ENCODE measurements at regions of chr10 and their contacts with region 1.

Region 1: GRCh38 chr10:178208-178607 is 43.0 kb downstream of the ZMYND11 start:
- DNase-seq: peak; percentile 66
- H3K4me3 ChIP-seq: no peak overlapping the region
- H3K27ac ChIP-seq: no peak overlapping the region
- H3K4me1 ChIP-seq: peaks cover 19% of the 10 kb centered on the region
- H3K27me3 ChIP-seq: no peaks in the 10 kb centered on the region
- CTCF ChIP-seq: peak; percentile 10 to 24
- POLR2A ChIP-seq: no peak

Region 2: GRCh38 chr10:154348-154747 is 23.9 kb before region 1 on chr10:
- CTCF ChIA-PET with region 1: no interaction called
- POLR2A ChIA-PET with region 1: no interaction called
- dilution Hi-C with region 1: no loop called
- intact Hi-C with region 1: no loop called
- DNase-seq: no peak
- H3K4me3 ChIP-seq: no peak overlapping the region
- H3K27ac ChIP-seq: no peak overlapping the region
- H3K4me1 ChIP-seq: no peaks in the 10 kb centered on the region
- H3K27me3 ChIP-seq: no peaks in the 10 kb centered on the region
- CTCF ChIP-seq: no peak
- POLR2A ChIP-seq: no peak

Region 3: GRCh38 chr10:167383-167782 is 10.8 kb before region 1 on chr10:
- CTCF ChIA-PET with region 1: no interaction called
- POLR2A ChIA-PET with region 1: no interaction called
- dilution Hi-C with region 1: no loop called
- intact Hi-C with region 1: no loop called
- DNase-seq: no peak
- H3K4me3 ChIP-seq: no peak overlapping the region
- H3K27ac ChIP-seq: no peak overlapping the region
- H3K4me1 ChIP-seq: no peaks in the 10 kb centered on the region
- H3K27me3 ChIP-seq: no peaks in the 10 kb centered on the region
- CTCF ChIP-seq: no peak
- POLR2A ChIP-seq: no peak

Region 4: DNA sequence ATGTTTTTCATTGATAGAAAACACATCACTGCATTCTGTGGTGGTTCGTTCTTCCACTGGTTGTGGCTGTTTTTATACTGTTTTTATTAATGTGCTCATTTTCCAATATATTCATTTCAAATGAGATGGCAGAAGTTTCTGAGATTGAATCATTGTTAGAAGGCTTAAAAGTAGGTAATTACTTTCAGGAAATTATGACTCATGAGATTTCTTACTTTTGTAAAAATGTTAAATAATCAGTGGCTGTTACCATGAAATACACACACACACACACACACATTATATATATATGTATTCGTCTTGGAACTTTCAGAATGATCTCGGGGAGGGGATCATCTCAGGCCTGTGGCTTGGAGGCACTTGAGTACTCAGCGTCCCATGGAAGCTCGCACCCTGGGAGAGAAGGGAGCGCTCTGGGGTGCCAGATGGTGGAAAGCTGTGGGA is 23.1 kb after region 1 on chr10:
- CTCF ChIA-PET with region 1: interaction called, 5 read pairs
- POLR2A ChIA-PET with region 1: no interaction called
- dilution Hi-C with region 1: no loop called
- intact Hi-C with region 1: loop called (anchors 1 kb)
- DNase-seq: peak; percentile 81
- H3K4me3 ChIP-seq: peak overlapping the region in 1 of 3 experiments; percentile 6
- H3K27ac ChIP-seq: peak overlapping the region; percentile 80
- H3K4me1 ChIP-seq: peaks cover 22% of the 10 kb centered on the region
- H3K27me3 ChIP-seq: no peaks in the 10 kb centered on the region
- CTCF ChIP-seq: no peak
- POLR2A ChIP-seq: no peak

Region 5: GRCh38 chr10:209361-209760 is 31.2 kb after region 1 on chr10:
- CTCF ChIA-PET with region 1: interaction called, 5 read pairs
- POLR2A ChIA-PET with region 1: no interaction called
- dilution Hi-C with region 1: no loop called
- intact Hi-C with region 1: loop called (anchors 1 kb)
- DNase-seq: peak; percentile 40
- H3K4me3 ChIP-seq: no peak overlapping the region
- H3K27ac ChIP-seq: no peak overlapping the region
- H3K4me1 ChIP-seq: no peaks in the 10 kb centered on the region
- H3K27me3 ChIP-seq: no peaks in the 10 kb centered on the region
- CTCF ChIP-seq: peak; percentile 7 to 17
- POLR2A ChIP-seq: no peak

Region 6: DNA sequence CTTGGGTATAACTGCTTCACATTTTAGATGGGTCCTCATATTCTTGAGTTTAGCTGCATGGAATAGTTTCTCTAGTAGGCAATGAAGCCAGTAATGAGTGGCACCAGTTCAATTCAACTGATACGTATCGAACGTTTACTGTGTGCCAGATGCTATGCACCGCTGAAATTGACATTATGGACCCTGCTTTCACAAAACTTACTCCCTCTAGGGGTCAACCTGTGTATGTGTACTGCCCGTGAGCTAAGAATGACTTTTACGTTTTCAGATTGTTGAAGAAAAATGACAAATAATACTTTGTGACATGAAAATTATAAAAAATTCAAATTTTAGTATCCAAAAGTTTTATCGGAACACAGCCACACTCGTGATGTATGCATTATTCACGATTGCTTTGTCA is 52.5 kb after region 1 on chr10:
- CTCF ChIA-PET with region 1: interaction called, 7 read pairs
- POLR2A ChIA-PET with region 1: no interaction called
- dilution Hi-C with region 1: no loop called
- intact Hi-C with region 1: loop called (anchors 2 kb)
- DNase-seq: peak; percentile 12
- H3K4me3 ChIP-seq: no peak overlapping the region
- H3K27ac ChIP-seq: no peak overlapping the region
- H3K4me1 ChIP-seq: peaks cover 4% of the 10 kb centered on the region
- H3K27me3 ChIP-seq: no peaks in the 10 kb centered on the region
- CTCF ChIP-seq: peak; percentile 43 to 47
- POLR2A ChIP-seq: no peak

Region 7: GRCh38 chr10:420154-421121 is 242.2 kb after region 1 on chr10:
- CTCF ChIA-PET with region 1: no interaction called
- POLR2A ChIA-PET with region 1: no interaction called
- dilution Hi-C with region 1: no loop called
- intact Hi-C with region 1: loop called (anchors 2 kb)
- DNase-seq: peak; percentile 92
- H3K4me3 ChIP-seq: peak overlapping the region in 1 of 3 experiments; percentile 29
- H3K27ac ChIP-seq: peak overlapping the region; percentile 91
- H3K4me1 ChIP-seq: peaks cover 14% of the 10 kb centered on the region
- H3K27me3 ChIP-seq: no peaks in the 10 kb centered on the region
- CTCF ChIP-seq: no peak
- POLR2A ChIP-seq: no peak

Region 8: DNA sequence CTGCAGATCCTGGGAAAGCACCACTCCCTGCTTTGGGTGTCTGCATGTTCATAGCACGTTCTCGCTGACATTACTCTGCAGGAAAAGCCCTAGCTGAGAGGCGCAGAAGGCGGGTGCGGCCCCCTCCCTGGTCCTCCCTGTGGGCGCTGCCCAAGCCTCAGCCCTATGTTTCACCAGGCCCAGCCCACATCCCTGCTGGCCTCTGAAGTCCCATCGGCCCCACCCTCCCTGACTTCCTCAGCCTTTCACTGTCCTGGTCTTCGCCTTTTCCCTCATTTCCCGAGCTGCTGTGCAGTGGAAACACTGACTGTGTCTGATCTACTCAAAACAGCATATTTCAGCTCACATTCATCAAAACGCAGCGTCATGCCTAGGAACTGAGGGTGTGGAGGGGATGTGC is 547.6 kb after region 1 on chr10:
- CTCF ChIA-PET with region 1: no interaction called
- POLR2A ChIA-PET with region 1: no interaction called
- dilution Hi-C with region 1: no loop called
- intact Hi-C with region 1: no loop called
- DNase-seq: no peak
- H3K4me3 ChIP-seq: no peak overlapping the region
- H3K27ac ChIP-seq: no peak overlapping the region
- H3K4me1 ChIP-seq: no peaks in the 10 kb centered on the region
- H3K27me3 ChIP-seq: no peaks in the 10 kb centered on the region
- CTCF ChIP-seq: no peak
- POLR2A ChIP-seq: no peak

Region 9: GRCh38 chr10:784403-785088 is 606.3 kb after region 1 on chr10:
- CTCF ChIA-PET with region 1: no interaction called
- POLR2A ChIA-PET with region 1: no interaction called
- dilution Hi-C with region 1: no loop called
- intact Hi-C with region 1: loop called (anchors 1 kb)
- DNase-seq: peak; percentile 76
- H3K4me3 ChIP-seq: peak overlapping the region in 1 of 3 experiments; percentile 20
- H3K27ac ChIP-seq: no peak overlapping the region
- H3K4me1 ChIP-seq: peaks cover 2% of the 10 kb centered on the region
- H3K27me3 ChIP-seq: no peaks in the 10 kb centered on the region
- CTCF ChIP-seq: peak; percentile 8 to 26
- POLR2A ChIP-seq: no peak